ENCODE measurements at regions of chr2 and their contacts with region 1.

Region 1: DNA sequence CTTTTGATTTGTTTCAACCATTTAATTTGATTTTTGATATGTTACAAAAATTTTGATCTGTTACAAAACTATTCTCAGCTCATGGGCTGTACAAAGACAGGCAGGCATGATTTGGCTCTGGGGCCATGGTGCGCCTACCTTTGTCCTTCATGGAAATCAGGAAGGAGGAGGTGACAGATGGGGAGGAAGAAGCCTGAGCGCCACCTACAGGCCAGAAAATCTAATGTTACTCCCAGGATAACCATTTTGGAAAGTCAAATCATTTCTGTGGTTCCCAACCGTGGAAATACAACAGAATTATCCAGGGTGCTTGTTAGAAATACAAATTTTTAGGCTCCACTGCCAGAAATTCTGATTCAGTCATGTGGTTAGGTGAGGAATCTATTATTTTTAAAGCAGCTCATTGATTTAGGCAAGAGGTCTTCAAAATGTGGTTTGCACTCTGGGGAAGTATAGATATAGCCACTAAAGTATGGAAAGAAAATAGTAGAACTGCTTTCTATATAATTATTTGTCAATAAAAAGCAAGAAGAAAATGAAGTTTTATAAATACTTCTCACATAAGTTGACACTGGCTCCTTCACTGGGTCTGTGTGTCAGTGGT is 93.9 kb downstream of the EVA1A start:
- DNase-seq: peak in 2 of 10 donors; percentile 16 to 21

Region 2: GRCh38 chr2:74862020-74862964 is 604.5 kb before region 1 on chr2:
- intact Hi-C with region 1: no loop called
- DNase-seq: no peak

Region 3: DNA sequence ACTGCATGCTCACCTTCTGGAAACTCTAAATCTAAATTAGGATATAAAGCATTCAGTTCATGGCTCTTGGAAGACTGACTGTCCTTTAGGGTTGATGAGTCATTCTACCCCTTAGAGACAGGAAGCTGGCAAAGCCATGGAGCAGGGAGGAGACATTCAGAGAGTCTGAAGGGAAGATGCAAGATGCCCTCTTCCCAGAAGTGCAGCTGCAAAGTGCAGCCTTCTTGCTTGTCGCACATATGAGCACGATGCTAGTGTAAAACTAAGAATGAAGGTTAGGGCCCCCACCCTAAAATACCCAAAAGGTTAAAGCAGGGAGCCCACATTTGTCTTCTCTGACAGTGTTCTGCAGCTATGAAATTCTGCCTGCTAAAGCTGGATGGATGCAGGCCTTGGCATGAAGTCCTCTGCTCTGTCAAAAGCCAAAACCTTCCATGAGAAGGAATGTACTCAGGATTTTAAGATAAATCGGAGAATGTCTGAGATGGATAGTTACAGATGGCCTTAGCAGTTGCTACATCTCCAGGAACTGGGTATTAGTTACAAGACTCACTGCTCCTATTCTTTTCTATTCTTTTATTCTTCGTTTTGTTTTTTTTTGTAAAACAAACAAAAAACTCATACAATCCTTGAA is 418.7 kb before region 1 on chr2:
- intact Hi-C with region 1: no loop called
- DNase-seq: no peak

Region 4: GRCh38 chr2:75204833-75205232 is 262.0 kb before region 1 on chr2:
- intact Hi-C with region 1: no loop called
- DNase-seq: no peak

Region 5: GRCh38 chr2:75454241-75454620 is 12.6 kb before region 1 on chr2:
- intact Hi-C with region 1: no loop called
- DNase-seq: no peak

Region 6: GRCh38 chr2:75608684-75609333 is 142.0 kb after region 1 on chr2:
- intact Hi-C with region 1: loop called (anchors 2 kb)
- DNase-seq: peak; percentile 13 to 95 (median 64)

Measured in posterior cingulate gyrus (tissue), 11 donors.